ENCODE measurements at regions of chr15 and their contacts with region 1.

Region 1: GRCh38 chr15:37134699-37135131 is 34.4 kb upstream of the MEIS2 start:
- DNase-seq: no peak
- ATAC-seq: peak; percentile 63

Region 2: DNA sequence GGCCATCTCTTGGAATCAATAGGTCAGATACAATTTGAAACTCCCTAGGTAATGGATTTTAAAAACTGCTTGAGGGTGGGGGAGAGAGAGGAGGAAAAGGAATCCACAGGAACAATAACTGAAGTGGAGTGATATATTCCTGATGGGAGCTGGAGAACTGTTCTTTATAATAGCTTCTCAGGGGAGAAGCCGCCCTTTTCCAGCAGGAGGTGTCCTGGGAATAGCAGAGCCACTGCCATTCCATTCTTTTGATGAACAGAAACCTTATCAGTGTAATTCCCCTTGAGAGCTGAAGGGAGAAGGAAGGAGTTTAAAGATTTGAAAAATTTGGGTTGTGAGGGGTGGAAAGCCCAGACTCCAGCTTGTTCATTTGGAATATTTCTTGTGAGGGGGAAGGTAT is 1083.8 kb before region 1 on chr15:
- intact Hi-C with region 1: loop called (anchors 10 kb)
- DNase-seq: no peak
- ATAC-seq: no peak

Region 3: DNA sequence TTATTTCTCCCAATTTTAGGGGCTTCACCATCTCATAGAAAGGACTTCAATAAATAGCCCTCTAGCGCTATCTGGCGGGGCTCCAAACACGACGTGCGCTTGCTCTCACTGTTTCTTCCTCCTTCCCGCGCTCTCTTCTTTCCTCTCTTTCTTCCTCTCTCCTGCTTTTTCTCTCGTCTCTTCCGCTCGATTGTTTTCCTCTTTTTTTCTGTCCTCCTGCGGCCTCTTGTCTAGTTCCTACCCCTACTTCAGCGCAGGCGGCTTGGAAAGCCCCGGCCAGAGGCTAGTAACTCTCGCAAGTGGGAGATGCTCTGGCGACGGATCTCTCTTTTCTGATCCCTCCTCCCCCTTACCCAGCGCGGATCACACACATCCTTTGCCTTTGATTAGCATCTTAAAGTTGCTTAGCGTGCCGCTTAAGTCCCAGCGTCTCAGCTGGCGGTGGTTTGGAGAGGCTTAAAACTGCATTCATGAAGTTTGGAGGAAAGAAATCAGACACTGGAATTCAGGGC is 28.2 kb before region 1 on chr15:
- intact Hi-C with region 1: no loop called
- DNase-seq: peak; percentile 71
- ATAC-seq: no peak

Region 4: DNA sequence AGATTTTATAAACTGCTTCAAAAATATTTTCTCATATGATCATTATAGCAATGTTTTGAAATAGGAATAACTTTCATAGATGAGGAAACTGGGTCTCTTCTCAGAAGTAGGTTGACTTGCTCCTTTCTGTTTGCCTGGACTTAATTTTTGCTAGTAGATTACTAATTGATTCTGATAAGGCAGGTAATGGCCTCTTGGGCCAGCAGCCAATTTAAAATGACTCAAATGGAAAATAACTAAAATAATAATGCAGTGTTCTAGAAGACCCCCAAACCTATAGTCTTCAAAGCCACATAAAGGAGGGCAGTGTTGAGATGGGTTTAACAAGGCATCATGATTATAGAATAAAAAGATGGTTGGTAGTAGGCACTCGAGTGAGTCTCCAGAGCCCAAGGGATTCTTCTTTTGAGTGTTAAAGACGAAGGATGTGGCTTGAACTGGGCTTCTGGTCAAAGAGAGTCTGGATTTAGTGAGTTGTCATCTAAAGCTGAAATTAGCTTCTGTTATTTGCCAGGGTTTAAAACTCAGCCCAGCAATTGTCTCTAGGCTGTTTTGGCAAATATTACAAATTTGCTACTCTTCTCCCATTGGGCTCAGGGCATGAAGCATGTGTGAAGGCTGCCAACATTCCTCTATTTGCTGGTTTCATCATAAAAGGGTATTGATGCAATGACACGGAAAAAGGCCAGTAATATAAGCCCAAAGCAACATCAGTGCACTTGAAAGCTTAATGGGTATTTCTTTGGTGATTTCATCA is 262.7 kb after region 1 on chr15:
- intact Hi-C with region 1: no loop called
- DNase-seq: no peak
- ATAC-seq: no peak

Measured in Right ventricle myocardium inferior (tissue), 1 donor.